ENCODE measurements at regions of chr2 and their contacts with region 1.

Region 1: DNA sequence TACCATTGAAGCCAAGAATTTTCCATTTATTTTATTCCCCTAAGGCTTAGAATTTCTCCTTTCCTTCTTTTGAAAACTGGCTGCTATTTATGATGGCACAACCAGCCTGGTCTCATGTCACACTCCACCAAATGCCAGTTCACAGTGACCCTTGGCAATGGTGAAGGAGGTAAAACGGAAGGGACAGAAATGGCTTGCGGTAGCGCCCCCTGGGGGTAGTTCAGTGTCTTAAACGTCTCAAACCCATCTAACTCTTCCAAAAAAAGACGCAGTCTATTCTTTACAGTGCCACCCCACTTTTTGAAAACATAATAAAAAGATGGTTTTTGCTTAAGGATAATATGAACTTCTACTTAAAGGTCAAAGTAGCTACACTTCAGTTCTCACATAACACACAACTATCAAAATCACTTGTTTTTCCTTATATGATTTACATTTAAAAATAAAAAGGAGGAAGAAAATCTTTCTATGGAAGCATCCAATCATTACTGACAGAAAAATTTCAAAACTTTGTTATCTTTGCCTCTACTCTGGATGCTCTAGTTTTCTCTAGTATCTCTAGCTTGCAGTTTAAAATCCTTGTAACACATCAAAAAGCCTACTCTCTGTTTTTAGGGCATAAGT is 28.0 kb downstream of the PNO1 start:
- DNase-seq: peak; percentile 52 to 81
- ATAC-seq: peak; percentile 84 to 88
- H3K4me3 ChIP-seq: no peak overlapping the region
- H3K27ac ChIP-seq: no peak overlapping the region
- H3K4me1 ChIP-seq: peaks cover 20% of the 10 kb centered on the region
- CTCF ChIP-seq: peak; percentile 87
- EP300 ChIP-seq: no peak
- POLR2A ChIP-seq: no peak
- RAD21 ChIP-seq: peak; percentile 25 to 29; a peak in 1 of 5 replicates

Region 2: GRCh38 chr2:66536997-66537396 is 1648.7 kb before region 1 on chr2:
- CTCF ChIA-PET with region 1: no interaction called
- POLR2A ChIA-PET with region 1: no interaction called
- DNase-seq: no peak
- ATAC-seq: no peak
- H3K4me3 ChIP-seq: no peak overlapping the region
- H3K27ac ChIP-seq: no peak overlapping the region
- H3K4me1 ChIP-seq: no peaks in the 10 kb centered on the region
- CTCF ChIP-seq: no peak
- EP300 ChIP-seq: no peak
- POLR2A ChIP-seq: no peak
- RAD21 ChIP-seq: no peak

Region 3: DNA sequence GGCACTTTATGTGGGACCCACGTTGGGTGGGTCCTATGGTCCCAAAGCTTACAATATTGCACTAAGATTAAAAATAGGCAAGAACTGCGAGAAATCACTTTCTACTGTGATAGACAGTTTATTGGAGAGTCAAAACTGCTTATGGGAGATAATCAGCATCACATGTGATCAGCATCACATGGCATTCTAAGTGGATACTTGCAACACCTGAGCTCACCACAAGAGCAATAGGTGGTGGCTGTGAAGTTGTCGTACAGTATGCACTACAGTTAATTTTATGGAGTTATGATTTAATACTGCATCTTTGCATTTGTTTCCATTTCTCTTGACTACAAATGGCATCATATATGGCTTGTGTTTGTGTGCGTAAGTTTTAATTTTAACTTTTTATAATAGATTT is 16.4 kb before region 1 on chr2:
- CTCF ChIA-PET with region 1: interaction called, 36 read pairs
- POLR2A ChIA-PET with region 1: interaction called, 3 read pairs
- DNase-seq: peak; percentile 22 to 50
- ATAC-seq: peak; percentile 53 to 67; a peak in 3 of 6 replicates
- H3K4me3 ChIP-seq: no peak overlapping the region
- H3K27ac ChIP-seq: no peak overlapping the region
- H3K4me1 ChIP-seq: no peaks in the 10 kb centered on the region
- CTCF ChIP-seq: no peak
- EP300 ChIP-seq: no peak
- POLR2A ChIP-seq: no peak
- RAD21 ChIP-seq: no peak

Region 4: DNA sequence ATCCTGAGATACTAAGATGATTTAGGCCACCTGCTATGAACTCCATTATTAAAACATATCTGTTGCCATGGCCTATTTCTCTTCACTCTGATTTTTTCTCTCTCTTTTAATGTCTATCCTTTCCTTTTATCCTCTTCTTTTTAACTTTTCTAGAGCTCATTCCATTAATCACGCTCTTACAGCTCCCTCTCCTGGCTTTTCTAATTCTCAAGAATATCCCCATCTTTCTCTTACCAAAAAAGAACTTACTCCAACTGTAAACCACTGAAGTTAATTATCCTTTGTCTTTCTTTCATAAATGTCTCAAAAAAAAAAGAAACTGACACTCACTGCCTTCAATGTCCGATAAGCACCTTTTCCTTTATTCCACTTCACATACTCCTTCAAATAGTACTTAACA is 58.8 kb after region 1 on chr2:
- CTCF ChIA-PET with region 1: interaction called, 11 read pairs
- POLR2A ChIA-PET with region 1: no interaction called
- DNase-seq: no peak
- ATAC-seq: 0 out of 6 replicates have a peak, but pooled peaks have one; percentile 35 to 48
- H3K4me3 ChIP-seq: no peak overlapping the region
- H3K27ac ChIP-seq: no peak overlapping the region
- H3K4me1 ChIP-seq: peaks cover 42% of the 10 kb centered on the region
- CTCF ChIP-seq: peak; percentile 34; the same call in 2 of the 3 replicates
- EP300 ChIP-seq: no peak
- POLR2A ChIP-seq: no peak
- RAD21 ChIP-seq: peak; percentile 39 to 43; a peak in 4 of 5 replicates

Measured in A549 (cell line).